GM12878 (cell line): ENCODE measurements at regions of chr19 and their contacts with region 1.

Region 1: DNA sequence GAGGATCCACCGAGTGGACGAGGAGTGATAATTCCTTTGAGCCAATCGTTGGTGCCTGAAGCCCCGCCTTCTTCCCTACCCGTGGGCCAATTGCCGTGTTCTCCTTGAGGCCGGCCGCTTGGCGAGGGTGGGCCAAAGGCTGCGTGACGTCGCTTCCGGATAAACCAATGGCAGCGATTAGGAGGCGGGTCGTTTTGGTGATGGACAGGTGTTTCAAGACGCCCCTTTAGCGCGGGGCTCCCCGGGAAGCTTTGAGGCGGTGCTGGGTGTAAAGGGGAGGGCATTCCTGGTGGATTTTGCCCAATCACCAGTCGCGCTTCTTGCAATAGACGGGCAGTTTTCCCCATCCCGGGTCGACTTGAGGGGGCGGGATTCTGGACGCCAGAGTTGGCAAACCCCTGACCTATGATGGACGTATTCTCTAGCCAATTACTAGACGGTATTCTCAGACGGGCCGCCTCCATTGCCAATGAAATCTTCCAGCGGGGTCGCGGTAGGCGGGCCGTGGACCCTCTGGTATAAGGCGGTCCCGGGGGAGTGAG is 310 bp upstream of the PRMT1 start:
- DNase-seq: peak; percentile 99
- ATAC-seq: peak; percentile 72
- H3K4me3 ChIP-seq: peak overlapping the region; percentile 100
- H3K27ac ChIP-seq: peak overlapping the region; percentile 99
- H3K4me1 ChIP-seq: peaks cover 36% of the 10 kb centered on the region
- H3K27me3 ChIP-seq: no peaks in the 10 kb centered on the region
- CTCF ChIP-seq: no peak
- EP300 ChIP-seq: no peak
- POLR2A ChIP-seq: no peak
- RAD21 ChIP-seq: no peak

Region 2: GRCh38 chr19:49546825-49547565 is 129.8 kb before region 1 on chr19:
- CTCF ChIA-PET with region 1: interaction called, 24 read pairs
- POLR2A ChIA-PET with region 1: interaction called, 3 read pairs
- RAD21 ChIA-PET with region 1: interaction called, 3 read pairs
- SMC1A ChIA-PET with region 1: interaction called, 7 read pairs
- in situ Hi-C with region 1: no loop called
- intact Hi-C with region 1: no loop called
- DNase-seq: peak; percentile 42
- ATAC-seq: peak; percentile 85
- H3K4me3 ChIP-seq: no peak overlapping the region
- H3K27ac ChIP-seq: no peak overlapping the region
- H3K4me1 ChIP-seq: no peaks in the 10 kb centered on the region
- H3K27me3 ChIP-seq: no peaks in the 10 kb centered on the region
- CTCF ChIP-seq: peak; percentile 75 to 90 (median 86)
- EP300 ChIP-seq: no peak
- POLR2A ChIP-seq: no peak
- RAD21 ChIP-seq: peak; percentile 91

Region 3: GRCh38 chr19:49580264-49581006 is 96.3 kb before region 1 on chr19 and contains the start of gene NOSIP:
- CTCF ChIA-PET with region 1: interaction called, 24 read pairs
- POLR2A ChIA-PET with region 1: interaction called, 21 read pairs
- RAD21 ChIA-PET with region 1: interaction called, 9 read pairs
- SMC1A ChIA-PET with region 1: interaction called, 11 read pairs
- in situ Hi-C with region 1: no loop called
- intact Hi-C with region 1: no loop called
- DNase-seq: peak; percentile 89
- ATAC-seq: peak; percentile 98
- H3K4me3 ChIP-seq: peak within 1 kb of the TSS; percentile 77
- H3K27ac ChIP-seq: peak within 1 kb of the TSS; percentile 65
- H3K4me1 ChIP-seq: peaks cover 7% of the 10 kb centered on the region; the same call in 1 of the 2 replicates
- H3K27me3 ChIP-seq: no peaks in the 10 kb centered on the region
- CTCF ChIP-seq: no peak
- EP300 ChIP-seq: no peak
- POLR2A ChIP-seq: peak; percentile 100
- RAD21 ChIP-seq: no peak
- polyA plus RNA-seq, gene NOSIP: 7.2 to 20.1 TPM

Region 4: DNA sequence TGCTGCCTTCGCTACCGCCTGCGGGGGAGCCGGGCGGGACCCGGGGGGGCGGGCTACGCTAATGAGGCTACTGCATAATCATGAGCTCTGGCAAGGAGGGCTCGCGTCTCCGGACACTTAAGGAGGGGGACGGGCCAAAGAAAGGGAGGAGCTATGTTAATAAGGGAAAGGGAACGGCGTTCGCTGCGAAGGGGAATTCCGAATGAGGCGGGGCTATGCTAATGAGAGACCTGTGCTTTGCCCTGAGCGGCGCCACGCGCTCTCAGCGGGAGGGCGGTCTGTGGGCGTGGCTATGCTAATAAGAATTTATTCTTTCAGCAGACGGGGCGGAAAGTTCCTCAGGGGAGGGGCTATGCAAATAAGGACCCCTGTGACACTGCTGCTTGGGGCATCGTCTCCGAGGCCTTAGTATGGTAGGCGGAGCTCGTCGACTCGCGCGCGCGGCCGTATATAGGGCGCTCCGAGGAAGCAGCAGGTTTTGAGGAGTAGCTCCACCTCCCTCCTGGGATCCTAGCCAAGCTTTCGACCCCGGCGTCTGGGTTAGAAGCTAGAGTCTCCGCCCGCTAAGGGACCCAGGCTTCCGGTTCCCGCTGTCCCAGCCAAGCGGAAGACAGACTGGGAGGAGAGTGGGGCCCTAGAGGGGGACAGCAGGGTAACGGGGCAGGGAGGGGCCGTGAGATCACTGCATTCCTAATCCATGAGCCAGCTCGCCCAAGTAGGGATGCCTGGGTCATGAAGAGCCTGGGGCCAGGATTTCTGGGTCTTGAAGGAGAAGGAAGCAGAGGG is 36.5 kb before region 1 on chr19 and contains the start of gene RRAS:
- CTCF ChIA-PET with region 1: interaction called, 130 read pairs
- POLR2A ChIA-PET with region 1: interaction called, 200 read pairs
- RAD21 ChIA-PET with region 1: interaction called, 131 read pairs
- SMC1A ChIA-PET with region 1: interaction called, 15 read pairs
- in situ Hi-C with region 1: no loop called
- intact Hi-C with region 1: loop called (anchors 1 kb)
- DNase-seq: peak; percentile 100
- ATAC-seq: peak; percentile 79
- H3K4me3 ChIP-seq: peak within 1 kb of the TSS; percentile 80
- H3K27ac ChIP-seq: peak within 1 kb of the TSS; percentile 98
- H3K4me1 ChIP-seq: peaks cover 18% of the 10 kb centered on the region
- H3K27me3 ChIP-seq: no peaks in the 10 kb centered on the region
- CTCF ChIP-seq: no peak
- EP300 ChIP-seq: no peak
- POLR2A ChIP-seq: peak; percentile 94
- RAD21 ChIP-seq: no peak
- polyA plus RNA-seq, gene RRAS: 0.24 to 0.29 TPM

Region 5: DNA sequence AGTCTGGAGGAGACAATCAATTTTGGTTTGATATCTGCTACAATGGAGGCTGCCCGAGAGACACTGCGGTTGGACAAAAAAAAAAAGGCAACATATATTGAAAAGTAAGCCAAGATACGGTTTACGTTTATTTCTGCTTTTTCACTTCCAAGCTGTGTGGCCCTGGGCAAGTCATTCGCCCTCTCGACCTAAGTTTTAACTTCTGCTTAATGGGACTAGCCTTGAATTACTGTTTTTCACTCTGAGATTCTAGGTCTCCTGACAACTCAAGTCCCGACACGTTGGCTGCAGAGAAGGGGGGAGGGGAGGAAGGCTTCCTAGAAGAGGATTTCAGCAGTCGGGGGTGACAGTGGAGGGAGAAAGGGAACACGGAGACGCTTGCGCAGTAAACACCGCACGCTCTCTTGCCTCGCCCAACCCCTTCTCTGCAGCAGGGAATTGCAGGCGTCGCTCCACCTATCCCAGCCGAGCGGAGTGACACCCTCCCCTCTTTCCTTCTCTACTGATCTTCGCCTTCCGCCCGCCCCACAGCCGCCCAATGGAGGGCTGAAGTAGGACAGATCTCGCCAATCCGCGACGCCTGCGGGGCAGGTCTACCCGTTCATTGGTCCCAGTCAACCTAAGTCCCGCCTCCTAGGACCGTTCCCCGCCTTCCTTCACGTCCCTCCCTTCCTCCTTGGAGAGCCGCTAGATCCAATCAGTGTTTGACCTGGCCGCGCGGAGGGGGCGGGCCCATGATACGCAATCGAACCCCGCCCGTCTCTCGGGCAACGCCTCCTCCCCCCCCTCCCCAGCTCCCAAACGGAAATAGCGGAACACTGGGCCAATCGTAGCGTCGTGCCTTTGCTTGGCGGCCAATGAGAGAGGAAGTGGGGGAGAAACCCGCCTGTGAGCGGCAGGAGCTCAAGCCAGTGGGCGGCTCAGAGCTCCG is 89.5 kb after region 1 on chr19:
- CTCF ChIA-PET with region 1: interaction called, 3 read pairs
- POLR2A ChIA-PET with region 1: interaction called, 9 read pairs
- RAD21 ChIA-PET with region 1: interaction called, 12 read pairs
- SMC1A ChIA-PET with region 1: no interaction called
- in situ Hi-C with region 1: no loop called
- intact Hi-C with region 1: no loop called
- DNase-seq: peak; percentile 100
- ATAC-seq: peak; percentile 96
- H3K4me3 ChIP-seq: peak overlapping the region; percentile 89
- H3K27ac ChIP-seq: peak overlapping the region; percentile 89
- H3K4me1 ChIP-seq: peaks cover 15% of the 10 kb centered on the region; the same call in 1 of the 2 replicates
- H3K27me3 ChIP-seq: no peaks in the 10 kb centered on the region; a peak in 1 of 4 replicates
- CTCF ChIP-seq: no peak
- EP300 ChIP-seq: no peak
- POLR2A ChIP-seq: peak; percentile 88
- RAD21 ChIP-seq: no peak